Breast epithelium (tissue), 4 donors: ENCODE measurements at regions of chr3 and their contacts with region 1.

Region 1: GRCh38 chr3:128907706-128908445 is 28.5 kb downstream of the ACAD9 start:
- DNase-seq: no peak
- H3K4me3 ChIP-seq: no peak overlapping the region
- H3K27ac ChIP-seq: no peak overlapping the region
- H3K4me1 ChIP-seq: no peaks in the 10 kb centered on the region
- H3K27me3 ChIP-seq: no peaks in the 10 kb centered on the region
- CTCF ChIP-seq: no peak
- POLR2A ChIP-seq: no peak

Region 2: DNA sequence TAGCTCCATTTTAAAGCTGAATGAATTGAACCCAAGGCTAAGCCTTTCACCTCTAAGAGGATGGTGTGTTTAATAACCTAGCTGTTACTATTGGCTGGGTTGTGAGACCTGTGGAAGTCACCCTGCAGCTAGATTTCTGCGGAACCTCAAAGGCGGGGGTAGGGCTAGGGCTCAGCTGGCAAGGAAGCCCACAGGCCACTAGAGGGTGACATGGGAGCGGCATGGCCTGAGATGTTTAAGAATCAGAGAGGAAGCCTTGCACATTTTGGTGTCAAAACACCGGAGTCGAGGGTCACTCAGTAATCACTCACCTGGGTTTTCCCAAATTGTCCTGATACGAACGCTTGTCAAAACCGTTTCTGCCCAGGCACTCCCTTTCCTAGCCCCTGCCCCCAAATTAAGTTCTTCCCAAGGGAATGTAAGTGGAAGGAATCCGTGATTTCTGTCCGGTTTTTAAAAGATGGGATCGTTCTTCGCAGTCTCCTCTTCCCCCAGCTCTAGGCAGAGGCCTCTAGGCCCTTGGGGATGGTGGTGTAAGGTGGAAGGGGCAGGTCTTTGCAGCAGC is 32.2 kb before region 1 on chr3:
- intact Hi-C with region 1: loop called (anchors 1 kb)
- DNase-seq: no peak
- H3K4me3 ChIP-seq: no peak overlapping the region
- H3K27ac ChIP-seq: no peak overlapping the region
- H3K4me1 ChIP-seq: peaks cover 0 to 4% of the 10 kb centered on the region in 2 donors
- H3K27me3 ChIP-seq: no peaks in the 10 kb centered on the region
- CTCF ChIP-seq: peak in 1 of 3 donors; percentile 10
- POLR2A ChIP-seq: no peak